ENCODE measurements at regions of chr15 and their contacts with region 1.

Region 1: DNA sequence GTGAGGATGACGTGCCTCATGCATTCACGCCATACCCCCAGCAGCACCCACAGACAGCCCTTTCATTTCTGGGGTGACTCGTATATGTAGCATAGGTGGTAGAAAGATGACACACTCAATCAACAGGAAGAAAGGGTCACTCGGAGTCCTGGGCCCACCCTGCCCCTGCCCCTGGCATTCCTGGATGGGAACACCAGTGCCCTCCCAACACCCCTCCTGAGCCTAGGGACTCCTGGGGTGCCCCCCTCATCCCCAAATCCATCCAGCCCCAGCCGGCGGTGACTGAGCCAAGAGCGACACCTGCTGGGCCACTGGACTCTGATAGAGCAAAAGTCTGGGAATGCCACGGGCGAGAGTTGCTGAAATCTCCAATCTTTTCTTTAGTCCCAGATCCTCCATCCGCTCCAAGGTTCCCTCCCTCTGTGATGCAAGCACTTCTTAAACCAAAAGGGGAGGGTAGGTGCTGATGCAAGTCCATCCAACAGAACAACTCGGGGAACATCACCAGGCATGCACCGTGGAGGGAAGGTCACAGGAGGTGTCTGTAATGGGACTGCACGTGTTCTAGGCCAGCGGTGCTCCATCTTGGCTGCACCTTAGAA is 31.1 kb downstream of the ACAN start:
- DNase-seq: peak; percentile 40
- H3K4me3 ChIP-seq: no peak overlapping the region
- H3K27ac ChIP-seq: no peak overlapping the region
- H3K4me1 ChIP-seq: no peaks in the 10 kb centered on the region
- H3K27me3 ChIP-seq: peaks cover 17% of the 10 kb centered on the region
- CTCF ChIP-seq: peak; percentile 70

Region 2: DNA sequence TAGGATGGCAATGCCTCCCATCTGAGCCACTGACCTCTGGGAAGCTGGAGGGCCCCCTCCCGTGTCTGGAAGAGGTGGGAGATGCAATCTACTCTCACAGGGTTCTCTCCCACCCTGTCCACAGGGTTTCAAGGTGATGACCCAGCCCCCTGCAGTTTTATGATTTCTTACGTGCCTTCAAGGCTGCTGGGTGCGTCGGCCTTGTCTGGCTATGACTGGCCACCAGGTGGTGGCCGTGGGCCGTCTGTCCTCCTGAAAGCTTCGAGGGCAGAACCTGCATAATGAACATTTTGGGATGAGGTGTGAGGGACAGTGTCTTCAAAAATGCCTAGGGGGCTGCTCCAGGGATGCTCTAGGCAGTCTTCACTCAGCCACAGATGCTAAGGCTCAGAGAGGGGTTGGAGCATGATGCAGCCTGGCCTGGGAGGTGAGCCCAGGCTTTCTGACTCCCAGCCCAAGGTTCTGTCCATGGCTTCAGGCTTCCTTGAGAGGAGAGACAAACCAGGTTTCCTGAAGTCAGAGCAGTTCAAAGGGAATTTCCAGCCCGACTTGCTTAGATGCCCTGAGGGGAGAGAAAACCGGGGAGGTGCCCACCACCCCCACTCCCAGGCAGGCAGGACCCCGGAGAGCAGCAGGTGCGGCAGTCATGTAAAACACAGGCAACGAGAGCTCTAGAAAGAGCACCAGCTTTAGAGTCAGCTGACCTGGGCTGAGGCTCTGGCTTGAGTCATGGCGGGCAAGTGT is 176.8 kb before region 1 on chr15:
- intact Hi-C with region 1: loop called (anchors 10 kb)
- DNase-seq: no peak
- H3K4me3 ChIP-seq: no peak overlapping the region
- H3K27ac ChIP-seq: no peak overlapping the region
- H3K4me1 ChIP-seq: peaks cover 10% of the 10 kb centered on the region
- H3K27me3 ChIP-seq: peaks cover 17% of the 10 kb centered on the region
- CTCF ChIP-seq: peak; percentile 79

Measured in left ventricle myocardium inferior (tissue), 1 donor.